Uterus (tissue), 4 donors: ENCODE measurements at regions of chr17 and their contacts with region 1.

Region 1: DNA sequence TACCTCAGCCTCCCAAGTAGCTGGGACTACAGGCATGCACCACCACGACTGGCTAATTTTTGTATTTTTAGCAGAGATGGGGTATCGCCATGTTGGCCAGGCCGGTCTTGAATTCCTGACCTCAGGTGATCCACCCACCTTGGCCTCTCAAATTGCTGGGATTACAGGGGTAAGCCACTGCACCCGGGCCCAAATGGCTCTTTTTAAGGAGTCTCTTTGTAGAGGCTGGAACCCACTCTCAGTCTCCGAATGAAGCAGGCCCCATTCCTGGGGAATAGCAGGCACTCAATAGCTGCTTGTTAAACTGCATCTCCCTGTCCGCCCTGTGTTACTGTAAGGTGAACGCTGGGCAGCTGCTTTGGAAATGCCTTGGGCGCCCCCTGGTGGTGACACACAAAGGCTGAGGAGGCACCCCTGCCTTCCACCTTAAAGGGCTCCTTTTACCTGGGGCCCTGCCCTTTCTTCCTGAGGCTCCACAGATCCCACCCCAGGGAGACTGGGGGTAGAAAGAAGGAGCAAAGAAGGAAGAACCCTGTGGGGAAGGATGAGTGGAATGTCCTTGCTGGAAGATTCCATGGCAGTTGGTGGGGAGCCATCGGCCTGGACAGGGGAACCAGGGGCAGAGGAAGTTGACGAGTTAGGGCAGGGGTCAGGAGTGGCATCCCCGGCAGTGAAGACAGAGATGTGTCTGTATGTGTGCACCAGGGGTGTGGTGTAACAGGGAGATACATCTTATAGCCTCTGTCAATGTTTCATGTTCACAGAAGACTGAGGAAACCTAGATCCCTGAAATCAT is 6.1 kb upstream of the SP2 start:
- DNase-seq: peak; percentile 84 to 90
- H3K4me3 ChIP-seq: no peak overlapping the region
- H3K27ac ChIP-seq: no peak overlapping the region
- H3K4me1 ChIP-seq: no peaks in the 10 kb centered on the region
- H3K27me3 ChIP-seq: no peaks in the 10 kb centered on the region
- CTCF ChIP-seq: peak; percentile 94 to 97 (median 94)
- POLR2A ChIP-seq: no peak

Region 2: DNA sequence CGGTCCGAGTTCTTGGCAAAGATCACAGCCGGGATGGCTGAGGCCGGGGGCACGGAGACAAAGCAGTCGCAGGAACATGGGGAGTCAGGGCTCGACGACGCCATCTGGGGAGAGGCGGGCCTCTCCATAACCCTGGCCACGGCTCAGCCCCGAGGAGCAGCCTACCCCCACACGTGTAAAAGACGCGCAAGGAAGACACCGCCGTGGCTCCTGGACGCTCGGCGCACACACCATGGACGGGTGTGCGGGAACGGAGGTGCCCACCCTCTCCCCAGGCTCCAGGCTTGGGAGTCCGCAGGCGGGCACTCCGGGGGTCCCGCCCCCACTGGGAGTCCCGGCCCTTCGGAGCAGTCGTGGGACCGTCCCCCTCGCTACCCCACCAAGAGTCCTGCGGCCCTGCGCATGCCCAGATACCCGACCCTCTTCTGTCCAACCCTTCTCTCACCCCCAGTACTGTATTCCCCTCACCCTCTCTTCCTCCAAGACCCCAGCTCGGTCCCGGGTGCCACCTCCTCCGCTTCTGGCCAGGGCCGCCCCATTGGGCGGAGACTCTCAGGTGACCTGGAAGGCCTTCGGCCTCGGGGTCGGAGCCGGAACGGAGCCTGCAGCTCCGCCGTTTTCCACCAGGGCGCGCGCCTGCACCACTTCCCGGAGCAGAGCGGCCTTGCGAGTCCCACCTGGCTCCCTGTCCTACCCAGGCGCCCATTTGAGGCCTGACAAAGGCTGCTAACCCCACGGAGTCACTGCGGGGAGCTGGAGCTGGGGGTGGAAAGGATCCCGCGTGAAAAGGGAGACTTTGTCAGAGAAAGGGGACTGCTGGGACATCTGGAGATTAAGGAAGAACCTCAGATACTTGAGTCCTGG is 49.0 kb before region 1 on chr17 and contains the start of gene SCRN2:
- intact Hi-C with region 1: loop called (anchors 2 kb)
- DNase-seq: peak; percentile 86 to 94
- H3K4me3 ChIP-seq: peak within 1 kb of the TSS; percentile 59 to 68
- H3K27ac ChIP-seq: peak within 1 kb of the TSS; percentile 69 to 78
- H3K4me1 ChIP-seq: no peaks in the 10 kb centered on the region
- H3K27me3 ChIP-seq: no peaks in the 10 kb centered on the region
- CTCF ChIP-seq: peak; percentile 94 to 99 (median 98)
- POLR2A ChIP-seq: peak; percentile 9 to 30
- total RNA-seq, gene SCRN2: 12.4 to 80.7 (median 39.8) TPM

Region 3: DNA sequence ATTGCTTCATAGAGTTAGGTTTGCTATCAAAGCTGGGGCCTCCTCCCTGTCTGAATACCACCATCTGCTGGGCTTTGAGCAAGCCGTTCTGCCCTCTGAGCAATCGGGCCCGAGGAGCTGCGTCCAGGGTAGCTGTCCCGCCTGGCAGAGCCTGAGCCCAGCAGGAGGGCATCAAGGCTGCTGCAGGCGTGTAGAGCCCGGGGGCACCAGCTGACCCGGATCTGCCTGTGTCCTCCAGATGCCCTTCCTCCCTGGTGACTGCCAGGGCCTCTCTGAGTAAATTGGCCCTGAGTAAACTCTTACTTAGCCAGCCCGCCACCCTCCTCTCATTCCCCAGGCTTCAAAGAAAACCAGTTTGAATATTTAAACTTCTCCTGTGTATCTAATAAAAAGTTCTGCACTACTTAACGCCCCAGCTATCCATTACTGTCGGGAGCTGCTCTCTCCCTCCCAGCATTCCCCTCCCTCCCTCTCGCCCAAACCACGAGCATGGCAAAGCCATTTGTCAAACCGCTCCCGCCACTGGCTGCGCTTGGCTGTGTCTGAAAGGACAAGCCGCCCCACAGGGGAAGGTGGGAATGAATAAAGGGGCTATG is 97.4 kb after region 1 on chr17:
- intact Hi-C with region 1: no loop called
- DNase-seq: no peak
- H3K4me3 ChIP-seq: no peak overlapping the region
- H3K27ac ChIP-seq: no peak overlapping the region
- H3K4me1 ChIP-seq: no peaks in the 10 kb centered on the region
- H3K27me3 ChIP-seq: no peaks in the 10 kb centered on the region
- CTCF ChIP-seq: no peak
- POLR2A ChIP-seq: no peak

Region 4: DNA sequence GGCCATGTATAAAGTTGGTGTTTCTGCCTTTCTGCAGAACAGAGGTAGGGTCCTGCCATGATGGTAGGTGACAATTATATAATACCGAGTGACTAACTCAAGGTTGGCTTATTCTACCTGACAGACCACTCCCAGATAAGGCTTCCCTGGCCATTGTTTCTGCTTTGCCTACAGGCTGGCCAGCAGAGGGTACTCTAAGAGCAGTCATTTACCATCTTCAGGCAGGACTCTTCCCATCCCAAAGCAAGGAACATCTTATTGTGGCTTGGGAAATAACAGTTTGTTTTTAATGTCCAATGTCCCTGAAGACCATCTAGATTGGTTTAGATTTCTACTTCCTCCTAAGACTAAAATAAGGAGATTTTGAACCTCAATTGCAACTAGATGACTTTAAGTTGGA is 291.7 kb after region 1 on chr17:
- intact Hi-C with region 1: no loop called
- DNase-seq: no peak
- H3K4me3 ChIP-seq: no peak overlapping the region
- H3K27ac ChIP-seq: no peak overlapping the region
- H3K4me1 ChIP-seq: no peaks in the 10 kb centered on the region
- H3K27me3 ChIP-seq: no peaks in the 10 kb centered on the region
- CTCF ChIP-seq: no peak
- POLR2A ChIP-seq: no peak